AG04450 (cell line): ENCODE measurements at regions of chr21 and their contacts with region 1.

Region 1: GRCh38 chr21:41283211-41283818 is 33.3 kb upstream of the FAM3B start:
- DNase-seq: peak; percentile 65
- H3K4me3 ChIP-seq: no peak overlapping the region
- H3K27ac ChIP-seq: no peak overlapping the region
- H3K27me3 ChIP-seq: no peaks in the 10 kb centered on the region
- CTCF ChIP-seq: peak; percentile 88

Region 2: GRCh38 chr21:41170442-41170841 is 112.9 kb before region 1 on chr21:
- CTCF ChIA-PET with region 1: interaction called, 12 read pairs
- POLR2A ChIA-PET with region 1: interaction called, 3 read pairs
- DNase-seq: no peak
- H3K4me3 ChIP-seq: no peak overlapping the region
- H3K27ac ChIP-seq: no peak overlapping the region
- H3K27me3 ChIP-seq: peaks cover 4% of the 10 kb centered on the region
- CTCF ChIP-seq: peak; percentile 80

Region 3: DNA sequence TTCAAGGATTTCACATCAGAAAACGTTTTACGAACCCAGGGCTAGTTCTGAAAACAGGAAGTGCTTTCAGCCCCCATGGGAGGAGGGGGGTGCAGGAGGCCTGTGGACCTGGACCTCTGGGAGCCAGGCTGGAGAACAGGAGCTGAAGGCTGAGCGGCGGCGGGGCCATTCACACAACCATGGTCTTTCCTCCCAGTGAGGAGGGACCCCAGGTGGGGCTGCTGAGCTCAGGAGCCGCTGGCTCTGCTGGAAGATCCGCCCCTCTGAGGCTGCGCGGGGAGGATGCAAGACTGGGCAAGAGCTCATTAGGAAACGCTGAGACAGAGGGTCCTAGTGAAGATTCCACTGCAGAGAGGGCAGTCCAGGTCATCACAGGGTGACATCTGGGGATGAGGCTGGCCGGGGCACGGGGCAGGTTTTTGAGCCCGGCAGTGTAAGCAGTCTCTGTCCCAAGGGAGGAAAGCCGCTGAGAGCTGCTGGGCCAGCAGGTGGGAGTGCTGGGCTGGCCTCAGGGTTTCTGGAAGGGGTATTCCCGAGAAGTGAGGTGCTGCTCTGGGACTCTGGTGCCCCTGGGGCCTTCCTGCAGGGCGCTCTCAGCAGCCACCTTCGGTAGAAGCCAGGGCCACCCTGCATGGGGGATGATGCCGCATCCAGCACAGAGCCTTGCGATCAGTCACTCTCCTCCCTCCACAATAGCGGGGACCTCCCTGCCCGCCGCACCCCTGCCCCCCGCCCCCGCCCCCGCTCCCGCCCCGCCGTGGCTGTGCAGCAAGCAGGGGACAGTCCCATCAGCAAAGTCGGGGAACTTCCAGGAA is 86.0 kb after region 1 on chr21:
- CTCF ChIA-PET with region 1: no interaction called
- POLR2A ChIA-PET with region 1: no interaction called
- DNase-seq: no peak
- H3K4me3 ChIP-seq: no peak overlapping the region
- H3K27ac ChIP-seq: no peak overlapping the region
- H3K27me3 ChIP-seq: peaks cover 3% of the 10 kb centered on the region
- CTCF ChIP-seq: peak; percentile 29

Region 4: DNA sequence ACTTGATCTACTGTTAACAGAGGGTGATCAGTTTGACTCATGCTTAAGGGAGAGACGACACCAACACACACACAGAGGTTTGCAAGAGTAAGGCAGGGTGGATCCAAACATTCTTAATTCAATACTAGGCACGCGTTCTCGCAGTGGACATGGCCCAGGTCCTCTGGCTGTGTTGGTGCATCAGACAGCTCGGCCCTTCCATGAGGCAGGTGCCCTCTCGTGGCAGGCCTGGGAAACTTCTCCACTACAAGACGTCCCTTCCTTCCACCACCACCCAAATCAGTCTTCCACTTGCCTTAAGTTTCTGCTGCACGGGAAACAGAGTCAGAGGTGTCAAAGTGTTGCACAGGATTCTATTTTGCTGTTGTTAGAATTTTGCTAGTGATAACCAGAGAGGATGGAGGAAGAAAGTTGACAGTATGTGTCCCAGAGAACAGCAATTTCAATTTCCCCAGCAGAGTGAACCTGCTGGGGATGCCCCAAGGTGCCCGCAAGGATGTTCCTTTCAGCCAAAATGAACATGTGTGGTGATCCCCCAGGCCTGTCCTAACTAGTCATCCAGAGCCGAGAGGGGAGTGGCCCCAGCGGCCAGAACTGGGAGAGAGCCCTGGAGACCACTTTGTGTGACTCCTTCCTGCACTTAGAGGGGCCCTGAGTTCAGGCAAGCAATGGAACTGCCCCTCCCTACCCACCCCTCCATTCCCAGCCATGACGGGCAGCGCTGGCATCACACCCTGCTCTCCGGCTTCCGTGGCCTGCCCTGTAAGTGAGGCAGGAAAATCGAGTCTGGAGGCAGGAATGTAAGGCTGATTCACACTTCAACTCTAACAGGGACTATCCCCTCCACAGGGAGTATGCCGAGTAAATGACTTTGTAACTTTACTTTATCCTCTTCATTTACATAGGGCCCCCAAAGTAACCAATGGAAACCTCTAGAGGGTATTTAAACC is 177.5 kb after region 1 on chr21:
- CTCF ChIA-PET with region 1: interaction called, 66 read pairs
- POLR2A ChIA-PET with region 1: no interaction called
- DNase-seq: peak; percentile 43
- H3K4me3 ChIP-seq: no peak overlapping the region
- H3K27ac ChIP-seq: no peak overlapping the region
- H3K27me3 ChIP-seq: peaks cover 2% of the 10 kb centered on the region
- CTCF ChIP-seq: peak; percentile 90

Region 5: GRCh38 chr21:41777951-41778874 is 494.9 kb after region 1 on chr21:
- CTCF ChIA-PET with region 1: interaction called, 17 read pairs
- POLR2A ChIA-PET with region 1: no interaction called
- DNase-seq: peak; percentile 30
- H3K4me3 ChIP-seq: no peak overlapping the region
- H3K27ac ChIP-seq: no peak overlapping the region
- H3K27me3 ChIP-seq: peaks cover 51% of the 10 kb centered on the region
- CTCF ChIP-seq: peak; percentile 77